H1 (cell line): ENCODE measurements at regions of chr20 and their contacts with region 1.

Region 1: GRCh38 chr20:49323622-49324238 is 45.9 kb upstream of the ZNFX1 start:
- DNase-seq: no peak
- H3K4me3 ChIP-seq: no peak overlapping the region
- H3K27ac ChIP-seq: no peak overlapping the region
- H3K4me1 ChIP-seq: peaks cover 0 to 12% (median 2%) of the 10 kb centered on the region in 4 experiments; a peak in 5 of 7 replicates
- H3K27me3 ChIP-seq: peaks cover 2 to 12% (median 11%) of the 10 kb centered on the region in 4 experiments
- CTCF ChIP-seq: peak in 2 of 3 experiments; percentile 35 to 37; a peak in 3 of 4 replicates
- EP300 ChIP-seq: no peak
- POLR2A ChIP-seq: no peak
- RAD21 ChIP-seq: peak; percentile 46 to 58

Region 2: GRCh38 chr20:49278036-49278817 is 45.5 kb before region 1 on chr20 and contains the start of gene ZNFX1:
- CTCF ChIA-PET with region 1: interaction called, 53 read pairs
- POLR2A ChIA-PET with region 1: interaction called, 1,132 read pairs
- DNase-seq: peak; percentile 97 to 98
- H3K4me3 ChIP-seq: peak within 1 kb of the TSS; percentile 73 to 97 (median 92)
- H3K27ac ChIP-seq: peak within 1 kb of the TSS; percentile 94
- H3K4me1 ChIP-seq: peaks cover 0 to 8% (median 5%) of the 10 kb centered on the region in 4 experiments; a peak in 3 of 7 replicates
- H3K27me3 ChIP-seq: peaks cover 0 to 1% (median 0%) of the 10 kb centered on the region in 4 experiments; a peak in 1 of 7 replicates
- CTCF ChIP-seq: 0 out of 4 replicates have a peak, but pooled peaks of 1 of the 3 experiments have one; percentile 5
- EP300 ChIP-seq: no peak
- POLR2A ChIP-seq: peak; percentile 100
- RAD21 ChIP-seq: no peak
- total RNA-seq, gene ZNFX1: 11.3 and 13.0 TPM in 2 replicates

Region 3: GRCh38 chr20:49286689-49287551 is 36.8 kb before region 1 on chr20:
- CTCF ChIA-PET with region 1: interaction called, 53 read pairs
- POLR2A ChIA-PET with region 1: interaction called, 1,132 read pairs
- DNase-seq: no peak
- H3K4me3 ChIP-seq: peak overlapping the region in 2 of 4 experiments; percentile 10 to 89; a peak in 4 of 8 replicates
- H3K27ac ChIP-seq: peak overlapping the region; percentile 34; the same call in 1 of the 2 replicates
- H3K4me1 ChIP-seq: peaks cover 2 to 15% (median 11%) of the 10 kb centered on the region in 4 experiments; a peak in 6 of 7 replicates
- H3K27me3 ChIP-seq: no peaks in the 10 kb centered on the region
- CTCF ChIP-seq: no peak
- EP300 ChIP-seq: no peak
- POLR2A ChIP-seq: peak in 1 of 2 experiments; percentile 36; a peak in 1 of 3 replicates
- RAD21 ChIP-seq: no peak

Region 4: DNA sequence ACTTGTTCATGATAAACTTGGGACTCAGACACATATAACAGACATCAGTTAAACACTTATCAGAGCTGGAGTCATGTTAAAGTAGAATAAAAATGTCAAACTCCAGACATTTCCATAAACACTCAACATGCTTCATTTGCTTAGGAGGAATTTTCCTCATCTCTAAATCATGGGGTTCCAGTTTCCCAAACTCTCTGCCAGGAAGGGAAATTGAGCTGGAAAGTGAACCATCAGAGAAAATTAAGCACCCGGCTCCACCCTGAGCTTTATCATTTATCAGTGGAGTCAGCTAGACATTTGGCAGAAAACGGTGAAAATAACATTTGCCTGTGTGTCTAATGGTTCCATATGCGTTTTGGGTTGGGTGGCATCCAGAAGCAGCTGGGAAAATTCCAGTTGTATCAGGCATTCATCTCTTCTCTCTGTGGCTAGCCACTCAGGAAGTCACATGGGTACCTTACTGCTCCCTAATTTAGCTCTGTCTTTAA is 20.6 kb before region 1 on chr20:
- CTCF ChIA-PET with region 1: interaction called, 41 read pairs
- POLR2A ChIA-PET with region 1: interaction called, 7 read pairs
- DNase-seq: no peak
- H3K4me3 ChIP-seq: no peak overlapping the region
- H3K27ac ChIP-seq: no peak overlapping the region
- H3K4me1 ChIP-seq: peaks cover 5 to 9% (median 7%) of the 10 kb centered on the region in 4 experiments; a peak in 5 of 7 replicates
- H3K27me3 ChIP-seq: no peaks in the 10 kb centered on the region; a peak in 1 of 7 replicates
- CTCF ChIP-seq: no peak
- EP300 ChIP-seq: no peak
- POLR2A ChIP-seq: no peak
- RAD21 ChIP-seq: no peak

Region 5: DNA sequence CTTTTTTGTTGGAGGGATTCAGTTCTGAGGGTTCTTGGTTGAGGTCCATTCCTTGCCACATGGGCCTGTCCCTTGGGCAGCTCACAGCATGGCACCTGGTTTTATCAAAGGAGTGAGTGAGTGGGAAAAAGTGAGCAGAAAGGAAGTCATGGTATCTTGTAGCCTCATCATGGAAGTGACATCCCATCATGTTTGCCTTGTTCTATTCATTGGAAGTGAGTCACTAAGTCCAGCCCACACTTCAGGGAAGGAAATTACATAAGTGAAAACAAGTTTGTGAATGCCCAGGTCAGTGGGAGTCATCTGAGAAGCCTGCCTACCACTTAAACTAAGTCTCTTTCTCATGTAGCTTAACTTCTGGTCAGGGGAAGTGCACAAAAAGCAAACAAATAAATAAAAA is 13.0 kb before region 1 on chr20:
- CTCF ChIA-PET with region 1: interaction called, 21 read pairs
- POLR2A ChIA-PET with region 1: interaction called, 3 read pairs
- DNase-seq: no peak
- H3K4me3 ChIP-seq: no peak overlapping the region
- H3K27ac ChIP-seq: no peak overlapping the region
- H3K4me1 ChIP-seq: peaks cover 5 to 9% (median 7%) of the 10 kb centered on the region in 4 experiments; a peak in 5 of 7 replicates
- H3K27me3 ChIP-seq: peaks cover 0 to 2% (median 0%) of the 10 kb centered on the region in 4 experiments; a peak in 3 of 7 replicates
- CTCF ChIP-seq: no peak
- EP300 ChIP-seq: no peak
- POLR2A ChIP-seq: no peak
- RAD21 ChIP-seq: no peak

Region 6: DNA sequence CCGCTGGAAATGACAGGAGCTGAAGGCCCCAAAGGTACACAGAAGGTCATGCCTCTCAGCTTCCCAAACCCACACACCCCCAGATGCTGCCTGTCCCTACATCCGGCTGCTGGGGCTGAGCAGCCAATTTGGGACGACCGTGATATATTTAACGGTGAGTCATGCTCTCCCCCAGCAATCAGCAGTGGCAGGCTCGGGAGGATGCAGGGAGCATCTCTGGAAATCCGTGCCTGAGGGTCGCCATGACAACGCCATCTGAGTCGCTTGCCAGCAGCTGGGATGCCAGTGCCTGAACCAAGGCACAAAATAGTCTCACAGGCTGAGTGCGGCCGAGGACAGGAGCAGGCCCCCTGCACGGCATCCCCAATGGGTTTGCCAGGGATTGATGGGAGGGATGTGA is 100.8 kb after region 1 on chr20:
- CTCF ChIA-PET with region 1: no interaction called
- POLR2A ChIA-PET with region 1: no interaction called
- DNase-seq: no peak
- H3K4me3 ChIP-seq: no peak overlapping the region
- H3K27ac ChIP-seq: no peak overlapping the region
- H3K4me1 ChIP-seq: no peaks in the 10 kb centered on the region
- H3K27me3 ChIP-seq: no peaks in the 10 kb centered on the region
- CTCF ChIP-seq: no peak
- EP300 ChIP-seq: no peak
- POLR2A ChIP-seq: no peak
- RAD21 ChIP-seq: no peak